Posterior cingulate gyrus (tissue), 11 donors: ENCODE measurements at regions of chr12 and their contacts with region 1.

Region 1: GRCh38 chr12:68236421-68237059 is 10.9 kb upstream of the IL26 start:
- DNase-seq: no peak

Region 2: GRCh38 chr12:67818459-67818903 is 418.1 kb before region 1 on chr12:
- intact Hi-C with region 1: no loop called
- DNase-seq: no peak

Region 3: GRCh38 chr12:68040450-68041075 is 196.0 kb before region 1 on chr12:
- intact Hi-C with region 1: no loop called
- DNase-seq: peak in 7 of 10 donors; percentile 25 to 86 (median 64)

Region 4: DNA sequence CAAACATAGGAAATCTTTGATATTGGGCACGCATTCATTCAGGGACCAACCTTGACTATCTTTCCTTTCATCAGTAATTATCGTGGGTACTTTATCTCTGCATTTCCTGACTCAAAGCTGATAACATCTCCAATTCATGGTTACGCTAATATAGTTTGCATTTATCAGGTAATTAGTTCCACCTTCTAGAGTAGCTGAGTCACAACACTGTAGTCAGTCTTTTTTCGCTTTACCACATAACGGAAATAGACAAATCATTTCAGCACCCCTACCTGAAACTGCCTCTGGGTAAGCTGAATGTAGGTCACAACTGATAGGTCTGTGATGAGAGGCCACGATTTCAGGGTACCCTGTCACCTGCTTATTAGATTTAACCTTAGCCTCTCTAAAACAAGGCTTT is 53.6 kb after region 1 on chr12:
- intact Hi-C with region 1: loop called (anchors 10 kb)
- DNase-seq: no peak

Region 5: GRCh38 chr12:68310370-68310769 is 73.8 kb after region 1 on chr12:
- intact Hi-C with region 1: no loop called
- DNase-seq: no peak

Region 6: GRCh38 chr12:68695454-68695853 is 458.9 kb after region 1 on chr12:
- intact Hi-C with region 1: no loop called
- DNase-seq: no peak